Endothelial cell of umbilical vein (primary cell): ENCODE measurements at regions of chr20 and their contacts with region 1.

Region 1: GRCh38 chr20:48295445-48295963 is 510.2 kb upstream of the SULF2 start:
- DNase-seq: peak; percentile 95
- H3K4me3 ChIP-seq: no peak overlapping the region
- H3K27ac ChIP-seq: peak overlapping the region; percentile 93
- H3K4me1 ChIP-seq: peaks cover 47% of the 10 kb centered on the region
- H3K27me3 ChIP-seq: no peaks in the 10 kb centered on the region
- CTCF ChIP-seq: peak; percentile 22 to 36
- POLR2A ChIP-seq: no peak

Region 2: DNA sequence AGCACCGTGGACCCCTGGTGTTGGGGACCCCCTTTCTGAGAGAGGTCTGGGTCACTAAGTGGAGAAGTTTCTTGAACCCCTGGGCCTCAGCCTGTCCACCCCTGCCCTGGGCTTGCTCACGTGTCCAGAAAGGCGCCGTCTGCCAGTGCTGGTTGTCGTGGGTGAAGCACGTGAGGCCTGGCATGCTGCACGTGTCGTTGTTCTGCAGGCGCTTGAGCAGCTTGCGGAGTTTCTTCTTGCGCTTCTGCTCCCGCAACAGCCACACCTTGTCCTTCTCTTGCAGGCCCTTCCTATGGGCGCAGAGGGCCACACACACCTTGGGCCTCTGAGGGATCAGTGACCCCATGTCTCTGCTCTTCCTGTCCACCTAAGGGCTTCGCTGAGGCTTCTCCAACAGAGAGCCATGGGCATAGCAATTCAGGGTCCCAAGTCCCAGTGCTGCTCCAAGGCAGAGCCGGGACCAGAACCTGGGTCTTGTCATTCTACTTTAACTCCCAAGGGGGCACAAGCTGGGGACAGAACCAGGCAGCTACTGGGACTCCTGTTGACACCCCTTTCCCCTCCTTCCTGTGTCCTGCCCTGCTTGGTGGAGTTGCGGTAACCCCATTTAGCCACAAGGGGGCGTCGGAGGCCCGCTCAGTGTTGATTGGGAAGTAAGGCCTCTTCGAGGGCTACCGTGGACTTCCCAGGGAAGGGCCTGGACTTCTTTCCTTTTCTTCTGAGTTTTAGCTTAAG is 632.0 kb before region 1 on chr20:
- CTCF ChIA-PET with region 1: interaction called, 8 read pairs
- POLR2A ChIA-PET with region 1: no interaction called
- dilution Hi-C with region 1: no loop called
- intact Hi-C with region 1: loop called (anchors 1 kb)
- DNase-seq: peak; percentile 79
- H3K4me3 ChIP-seq: no peak overlapping the region
- H3K27ac ChIP-seq: no peak overlapping the region
- H3K4me1 ChIP-seq: peaks cover 7% of the 10 kb centered on the region
- H3K27me3 ChIP-seq: no peaks in the 10 kb centered on the region
- CTCF ChIP-seq: peak; percentile 94 to 96
- POLR2A ChIP-seq: no peak

Region 3: DNA sequence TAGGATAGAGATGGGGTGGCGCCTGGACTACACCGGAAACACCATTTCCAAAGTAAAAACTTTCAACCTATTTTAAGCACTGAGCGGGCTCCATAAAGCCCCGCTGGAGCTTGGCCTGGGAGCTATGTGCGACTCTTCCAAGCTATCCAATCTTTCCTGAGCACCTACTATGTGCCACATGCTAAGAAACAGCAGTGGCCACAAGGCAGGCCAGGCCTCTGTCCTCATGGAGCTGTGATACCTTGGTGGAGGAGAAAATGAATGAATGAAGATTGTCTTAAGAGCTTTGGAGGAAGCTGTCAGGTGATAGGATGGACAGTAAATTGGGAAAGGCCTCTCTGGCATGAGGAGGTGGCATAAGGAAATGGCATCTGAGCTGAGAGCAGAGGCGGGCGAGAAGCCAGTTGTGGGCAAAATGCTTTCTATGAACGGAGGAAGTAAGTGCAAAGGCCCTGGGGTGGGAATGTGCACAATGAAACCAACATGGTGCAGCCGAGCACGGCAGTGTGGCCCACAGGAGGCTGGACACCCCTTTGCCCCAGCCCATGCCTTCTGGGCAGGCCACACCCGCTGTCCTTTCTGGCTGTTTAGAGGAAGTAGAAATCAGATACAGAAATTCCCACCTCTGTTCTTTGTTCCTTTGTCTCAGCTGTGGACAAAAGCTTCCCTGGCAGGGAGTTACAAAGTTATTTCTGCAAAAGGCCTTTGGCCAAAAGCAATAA is 522.3 kb before region 1 on chr20:
- CTCF ChIA-PET with region 1: no interaction called
- POLR2A ChIA-PET with region 1: no interaction called
- dilution Hi-C with region 1: no loop called
- intact Hi-C with region 1: loop called (anchors 5 kb)
- DNase-seq: peak; percentile 78
- H3K4me3 ChIP-seq: no peak overlapping the region
- H3K27ac ChIP-seq: peak overlapping the region; percentile 42
- H3K4me1 ChIP-seq: peaks cover 14% of the 10 kb centered on the region
- H3K27me3 ChIP-seq: peaks cover 0 to 3% of the 10 kb centered on the region in 2 experiments
- CTCF ChIP-seq: no peak
- POLR2A ChIP-seq: no peak

Region 4: DNA sequence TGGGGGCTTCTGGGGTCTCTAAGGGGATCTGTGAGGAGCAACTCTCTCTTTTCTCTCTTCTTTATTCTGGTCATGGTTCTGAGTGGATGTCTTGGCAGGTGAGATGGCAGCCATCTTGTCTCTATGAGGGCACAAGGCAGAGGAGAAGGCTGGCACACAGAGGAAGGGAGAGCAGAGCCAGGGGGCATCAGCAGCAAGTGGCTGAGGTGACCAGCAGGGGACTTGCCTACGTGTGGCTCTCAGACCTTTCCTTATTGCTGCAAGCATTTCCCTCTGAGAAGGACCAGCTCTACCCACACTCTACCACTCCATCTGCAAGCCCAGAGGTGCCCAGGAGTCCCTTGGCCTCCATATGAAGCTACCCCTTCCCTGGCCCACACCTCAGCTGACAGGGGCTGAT is 417.5 kb before region 1 on chr20:
- CTCF ChIA-PET with region 1: interaction called, 6 read pairs
- POLR2A ChIA-PET with region 1: no interaction called
- dilution Hi-C with region 1: no loop called
- intact Hi-C with region 1: loop called (anchors 1 kb)
- DNase-seq: no peak
- H3K4me3 ChIP-seq: no peak overlapping the region
- H3K27ac ChIP-seq: peak overlapping the region; percentile 84
- H3K4me1 ChIP-seq: peaks cover 47% of the 10 kb centered on the region
- H3K27me3 ChIP-seq: no peaks in the 10 kb centered on the region
- CTCF ChIP-seq: peak in 1 of 2 donors; percentile 33
- POLR2A ChIP-seq: no peak

Region 5: DNA sequence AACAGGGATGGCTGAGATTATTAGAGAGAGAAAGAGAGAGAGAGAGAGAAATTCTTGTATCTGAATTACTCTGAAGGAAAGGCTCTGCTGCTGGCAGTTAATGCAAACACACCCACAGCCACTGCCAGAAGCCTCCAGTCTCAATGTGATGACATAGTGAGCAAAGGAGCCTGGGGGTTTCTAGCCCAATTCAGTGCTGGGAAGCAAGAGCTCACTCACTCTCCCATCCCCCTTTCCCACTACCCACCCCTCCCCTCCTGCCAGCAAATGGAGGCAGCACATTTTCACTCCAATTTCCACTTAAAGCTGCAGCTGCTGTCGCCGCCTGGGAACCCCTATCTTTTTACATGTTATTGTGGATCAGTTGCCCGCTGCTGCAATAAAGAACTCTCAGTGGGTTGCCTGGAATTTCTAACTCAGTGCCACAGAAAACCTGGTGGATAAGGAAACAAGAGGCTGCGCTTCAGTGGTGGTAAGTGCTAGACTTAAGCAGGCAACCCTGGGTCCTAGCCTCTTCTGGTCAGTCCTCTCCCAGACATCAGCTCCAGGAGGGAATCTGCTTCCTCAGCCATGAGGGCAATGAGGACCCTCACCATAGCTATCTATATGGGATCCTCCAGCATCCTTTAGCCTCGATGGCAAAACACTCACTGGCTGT is 19.7 kb before region 1 on chr20:
- CTCF ChIA-PET with region 1: interaction called, 8 read pairs
- POLR2A ChIA-PET with region 1: no interaction called
- dilution Hi-C with region 1: no loop called
- intact Hi-C with region 1: loop called (anchors 1 kb)
- DNase-seq: no peak
- H3K4me3 ChIP-seq: no peak overlapping the region
- H3K27ac ChIP-seq: no peak overlapping the region
- H3K4me1 ChIP-seq: peaks cover 19% of the 10 kb centered on the region
- H3K27me3 ChIP-seq: peaks cover 0 to 5% of the 10 kb centered on the region in 2 experiments
- CTCF ChIP-seq: no peak
- POLR2A ChIP-seq: no peak

Region 6: DNA sequence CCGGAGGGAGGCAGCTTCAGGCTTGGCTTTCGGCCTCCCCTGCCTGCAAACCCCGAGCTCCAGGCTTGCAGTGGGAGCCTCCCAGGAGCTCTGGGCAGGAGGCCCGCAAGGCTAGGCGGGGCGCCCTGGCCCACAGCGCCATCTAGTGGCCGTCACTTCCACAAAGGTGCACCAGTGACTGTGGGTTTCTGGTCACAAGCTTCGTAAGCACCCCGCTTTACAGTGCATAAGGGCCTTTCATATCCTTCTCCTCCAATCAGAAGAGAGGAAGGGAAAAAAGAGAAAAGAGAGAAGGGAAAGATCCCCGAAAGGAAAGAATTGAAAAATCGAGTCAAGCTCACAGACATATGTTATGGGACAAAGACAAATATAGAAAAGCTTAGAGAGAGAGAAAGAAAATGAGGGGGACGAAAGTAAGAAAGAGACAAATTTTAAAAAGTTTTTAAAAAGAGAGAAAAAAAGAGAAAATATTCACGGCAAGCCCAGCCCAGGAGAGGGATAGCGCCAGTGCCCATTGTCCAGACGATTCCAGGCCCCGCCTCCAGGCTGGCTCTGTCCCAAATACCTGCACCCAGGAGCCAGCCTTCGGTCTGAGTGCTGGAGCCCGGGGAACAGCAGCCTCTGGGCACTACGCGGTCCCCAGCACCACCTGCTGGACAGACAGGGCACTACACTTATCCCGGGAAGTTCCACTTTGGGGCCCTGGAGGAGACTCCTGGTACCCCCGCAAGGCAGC is 325.2 kb after region 1 on chr20:
- CTCF ChIA-PET with region 1: interaction called, 36 read pairs
- POLR2A ChIA-PET with region 1: no interaction called
- dilution Hi-C with region 1: no loop called
- intact Hi-C with region 1: loop called (anchors 1 kb)
- DNase-seq: peak; percentile 85
- H3K4me3 ChIP-seq: peak overlapping the region in 1 of 3 experiments; percentile 43
- H3K27ac ChIP-seq: peak overlapping the region; percentile 42
- H3K4me1 ChIP-seq: peaks cover 12% of the 10 kb centered on the region
- H3K27me3 ChIP-seq: no peaks in the 10 kb centered on the region
- CTCF ChIP-seq: peak; percentile 83 to 95
- POLR2A ChIP-seq: no peak